Posterior cingulate gyrus (tissue), 11 donors: ENCODE measurements at regions of chr20 and their contacts with region 1.

Region 1: DNA sequence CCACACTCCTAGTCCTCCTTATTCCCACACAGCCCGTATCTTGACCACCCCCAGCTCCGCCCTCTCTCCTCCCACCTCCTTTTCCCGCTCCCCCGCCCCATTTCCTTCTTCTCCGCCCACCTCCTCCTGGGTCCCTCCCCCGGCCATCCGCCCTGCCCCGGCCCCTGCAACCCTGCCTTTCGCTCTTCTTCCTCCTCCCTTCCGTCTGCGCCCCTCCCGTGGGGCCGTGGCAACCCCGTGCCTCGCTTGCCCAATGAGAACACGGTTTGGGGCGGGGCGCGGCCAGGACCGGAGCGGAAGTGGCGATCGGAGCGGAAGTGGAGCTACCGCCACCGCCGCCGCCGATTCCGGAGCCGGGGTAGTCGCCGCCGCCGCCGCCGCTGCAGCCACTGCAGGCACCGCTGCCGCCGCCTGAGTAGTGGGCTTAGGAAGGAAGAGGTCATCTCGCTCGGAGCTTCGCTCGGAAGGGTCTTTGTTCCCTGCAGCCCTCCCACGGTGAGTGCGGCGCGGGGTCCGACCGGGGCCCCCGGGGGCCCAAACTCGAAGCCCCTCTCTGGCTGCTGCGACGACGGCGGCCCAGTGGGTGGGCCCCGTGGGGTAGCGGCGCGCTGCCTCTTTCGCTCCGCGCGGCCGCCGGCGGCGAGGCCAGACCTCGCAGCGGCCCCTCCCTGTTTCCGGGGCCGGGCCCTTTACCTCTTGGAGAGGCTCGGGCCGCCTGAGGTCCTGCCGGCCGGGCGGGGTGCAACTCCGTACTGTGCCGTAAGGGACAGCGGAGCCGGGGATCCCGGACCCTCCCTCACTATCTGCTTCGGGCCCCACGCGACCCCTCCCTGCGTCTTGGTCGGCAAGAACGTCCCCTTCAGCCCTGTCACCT is at the start of gene YWHAB:
- DNase-seq: peak; percentile 94 to 100 (median 97)

Region 2: DNA sequence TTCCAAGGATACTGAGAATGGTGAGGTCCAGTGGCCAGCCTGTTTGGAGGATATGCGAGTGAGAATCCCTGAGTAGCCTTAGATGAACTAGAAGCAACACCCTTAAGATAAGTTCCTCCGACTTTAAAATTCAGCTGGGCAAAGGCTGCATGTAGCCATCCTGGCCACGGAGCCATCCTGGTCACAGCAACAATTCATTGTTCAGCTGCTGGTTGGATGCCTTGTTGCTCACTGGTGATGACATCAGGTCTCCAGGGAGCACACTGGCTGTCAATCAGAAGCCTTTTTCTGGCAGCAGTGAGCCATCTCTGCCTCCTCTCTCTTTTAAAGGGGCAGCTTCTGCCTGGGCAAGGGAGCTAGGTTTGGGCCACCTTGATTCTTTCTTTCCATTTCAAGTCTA is 52.9 kb before region 1 on chr20:
- intact Hi-C with region 1: no loop called
- DNase-seq: peak in 2 of 10 donors; percentile 24 to 34

Region 3: DNA sequence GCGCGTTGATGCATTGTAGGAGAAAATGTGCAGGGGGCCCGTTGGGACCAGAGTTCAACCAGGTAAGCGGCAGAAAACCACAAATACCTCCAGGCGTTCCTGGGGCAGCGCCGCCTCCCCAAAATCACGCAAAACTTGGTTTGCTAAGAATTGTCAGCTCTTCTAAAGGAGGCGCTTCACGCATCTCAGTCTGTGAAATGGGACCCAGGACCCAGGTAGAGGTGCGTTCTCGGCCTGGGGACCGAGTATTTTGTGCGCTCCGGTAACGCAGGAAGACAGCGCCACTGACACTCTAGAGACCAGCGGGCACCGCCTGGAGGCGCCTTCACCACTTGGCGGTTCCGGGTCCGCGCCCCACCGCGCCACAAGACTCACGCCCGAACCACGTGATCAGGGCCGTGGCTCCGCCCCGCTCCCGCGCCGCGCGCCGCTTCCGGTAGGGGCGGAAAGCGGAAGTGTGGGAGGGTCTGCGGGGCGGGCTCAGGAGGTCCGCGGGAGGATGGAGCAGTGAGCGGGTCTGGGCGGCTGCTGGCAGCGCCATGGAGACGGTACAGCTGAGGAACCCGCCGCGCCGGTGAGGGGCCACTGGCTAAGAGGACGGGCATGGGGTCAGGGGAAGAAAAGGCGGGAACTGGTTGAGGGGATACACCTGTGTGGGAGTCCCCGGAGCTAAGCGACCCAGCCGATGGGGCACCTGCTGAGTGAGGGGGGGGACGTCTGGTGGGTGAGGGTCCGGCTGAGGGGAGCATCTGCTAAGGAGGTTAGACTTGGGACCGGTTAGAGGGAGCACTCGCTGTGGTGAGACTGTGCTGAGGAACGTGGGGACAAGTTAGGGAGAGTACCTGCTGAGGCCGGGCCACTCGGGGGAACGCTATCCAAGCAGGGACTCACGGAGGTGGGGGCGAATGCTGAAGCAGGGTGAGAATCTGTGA is 80.7 kb after region 1 on chr20 and contains the start of gene STK4:
- intact Hi-C with region 1: loop called (anchors 2 kb)
- DNase-seq: peak; percentile 89 to 99 (median 93)